ENCODE measurements at regions of chr10 and their contacts with region 1.

Region 1: DNA sequence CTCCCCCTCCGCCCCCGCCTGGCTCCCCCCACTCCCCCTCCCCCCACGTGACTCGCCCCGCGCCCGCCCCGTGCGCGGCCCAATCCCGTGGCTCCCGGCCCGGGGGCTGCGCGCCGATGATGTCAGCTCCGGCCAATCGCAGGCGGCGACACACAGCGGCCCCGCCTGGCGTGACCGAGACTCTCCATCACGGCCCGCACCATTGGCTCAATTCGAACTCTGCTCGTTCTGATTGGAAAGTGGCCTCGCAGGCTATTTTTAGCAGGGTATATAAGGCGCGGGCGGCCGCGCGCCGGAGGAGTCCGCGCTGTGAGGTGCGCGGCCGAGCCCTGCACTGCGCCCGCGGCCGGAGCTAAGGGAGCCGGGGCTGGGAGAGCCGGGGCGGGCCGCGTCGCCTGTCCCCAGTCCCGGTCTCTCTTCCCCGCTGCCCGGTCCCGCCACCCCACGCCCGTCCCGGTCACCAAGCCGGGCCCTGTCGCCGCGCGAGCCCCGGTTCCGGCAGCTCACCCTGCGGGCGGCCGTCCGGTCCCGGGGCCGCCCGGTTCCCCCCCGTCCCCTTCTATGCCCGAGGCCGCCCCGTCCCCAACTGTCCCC is 345 bp upstream of the KLF6 start:
- DNase-seq: peak; percentile 97 to 99
- ATAC-seq: peak; percentile 70 to 80
- H3K4me3 ChIP-seq: peak overlapping the region; percentile 82
- H3K27ac ChIP-seq: peak overlapping the region; percentile 100
- H3K4me1 ChIP-seq: peaks cover 26% of the 10 kb centered on the region
- CTCF ChIP-seq: no peak
- EP300 ChIP-seq: peak in 1 of 2 experiments; percentile 22; a peak in 2 of 5 replicates
- POLR2A ChIP-seq: peak; percentile 98
- RAD21 ChIP-seq: no peak; a peak in 1 of 5 replicates

Region 2: DNA sequence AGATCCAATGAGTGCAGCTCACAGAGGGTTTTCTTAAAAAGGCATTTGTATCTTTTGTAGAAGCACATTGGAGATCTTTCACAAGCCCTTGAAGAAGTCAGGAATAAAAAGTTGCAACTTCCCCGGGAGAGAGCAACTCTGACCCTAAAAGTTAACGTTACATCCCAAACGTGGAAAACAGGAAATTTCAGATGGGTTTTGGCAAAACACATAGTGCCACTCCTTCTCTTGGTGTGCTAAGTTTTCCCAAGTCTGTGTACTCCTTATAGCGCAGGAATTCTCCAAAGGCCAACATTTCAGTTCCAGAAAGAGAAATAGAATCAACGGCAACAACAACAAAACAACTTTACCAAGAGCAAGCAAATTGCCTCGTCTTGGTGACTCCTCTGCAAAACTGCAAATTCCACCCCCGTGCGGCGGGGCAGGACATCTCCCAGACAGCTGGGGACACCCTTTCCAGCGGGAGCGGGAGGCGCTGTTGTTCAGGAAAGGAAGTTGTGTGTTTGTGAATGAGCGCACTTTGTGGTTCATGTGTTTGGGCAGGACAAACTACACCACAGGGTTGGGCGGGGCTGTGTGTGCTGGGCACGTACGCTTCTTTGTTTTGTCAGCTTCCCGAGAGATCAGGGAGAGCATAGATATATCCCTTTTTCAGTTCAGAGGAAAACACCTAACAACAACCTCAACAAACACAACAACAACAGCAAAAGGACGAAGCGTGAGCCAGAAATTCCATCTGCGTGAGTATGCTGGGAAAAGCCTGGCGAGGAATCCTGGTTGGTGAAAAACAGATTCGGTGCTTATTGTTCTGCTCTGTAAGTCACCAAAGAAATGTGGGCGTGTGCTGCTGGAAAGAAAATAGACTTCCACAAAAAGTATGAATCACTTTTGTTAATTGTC is 318.1 kb before region 1 on chr10:
- CTCF ChIA-PET with region 1: interaction called, 6 read pairs
- POLR2A ChIA-PET with region 1: interaction called, 27 read pairs
- DNase-seq: peak; percentile 73 to 98
- ATAC-seq: peak; percentile 76 to 80
- H3K4me3 ChIP-seq: peak overlapping the region; percentile 33
- H3K27ac ChIP-seq: peak overlapping the region; percentile 82 to 92
- H3K4me1 ChIP-seq: peaks cover 47% of the 10 kb centered on the region
- CTCF ChIP-seq: peak; percentile 91
- EP300 ChIP-seq: no peak
- POLR2A ChIP-seq: no peak
- RAD21 ChIP-seq: peak; percentile 86 to 91

Region 3: DNA sequence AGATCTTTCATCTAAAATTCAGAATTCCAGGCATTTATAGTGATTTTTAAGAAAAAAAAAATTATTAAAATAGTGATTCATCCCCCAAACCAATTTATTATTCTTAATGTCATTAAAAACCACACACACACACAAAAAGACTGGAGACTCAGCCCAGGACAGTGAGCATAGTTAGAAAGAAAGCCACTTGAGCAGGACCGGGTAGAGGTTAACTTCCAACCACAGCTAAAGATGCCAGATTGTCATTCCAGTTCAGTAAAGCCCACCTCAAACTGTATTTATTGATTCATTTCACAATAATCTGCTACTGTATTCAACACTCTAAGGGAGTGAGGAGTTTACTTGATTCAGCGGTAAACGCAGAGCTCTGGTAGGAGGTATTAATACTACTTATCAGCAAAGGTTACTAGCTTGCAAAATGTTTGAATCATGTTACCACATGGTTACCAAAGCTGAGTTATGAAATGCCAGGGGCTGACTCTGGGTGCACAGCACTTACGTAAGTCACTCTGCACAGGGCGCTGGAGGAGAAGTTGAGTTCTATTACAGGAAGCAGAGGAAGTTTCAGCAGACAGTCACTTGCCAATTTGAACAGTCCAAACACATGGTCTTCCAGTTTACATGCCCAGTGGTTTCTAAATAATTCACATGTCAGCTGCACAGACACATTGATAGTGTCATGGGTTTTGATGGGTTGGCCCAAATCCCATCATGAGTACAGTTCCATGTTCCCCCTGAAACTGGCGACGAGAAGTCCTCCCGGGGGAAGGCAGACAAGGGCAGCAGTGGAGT is 64.9 kb before region 1 on chr10:
- CTCF ChIA-PET with region 1: no interaction called
- POLR2A ChIA-PET with region 1: no interaction called
- DNase-seq: no peak
- ATAC-seq: 0 out of 6 replicates have a peak, but pooled peaks of 1 of the 2 experiments have one; percentile 47
- H3K4me3 ChIP-seq: no peak overlapping the region
- H3K27ac ChIP-seq: no peak overlapping the region
- H3K4me1 ChIP-seq: 0 out of 3 replicates have a peak, but pooled peaks cover 3% of the 10 kb centered on the region
- CTCF ChIP-seq: no peak
- EP300 ChIP-seq: no peak
- POLR2A ChIP-seq: no peak
- RAD21 ChIP-seq: no peak

Region 4: GRCh38 chr10:3811291-3811870 is 26.0 kb after region 1 on chr10:
- CTCF ChIA-PET with region 1: interaction called, 8 read pairs
- POLR2A ChIA-PET with region 1: interaction called, 75 read pairs
- DNase-seq: no peak
- ATAC-seq: no peak
- H3K4me3 ChIP-seq: no peak overlapping the region
- H3K27ac ChIP-seq: peak overlapping the region; percentile 82 to 84
- H3K4me1 ChIP-seq: peaks cover 60% of the 10 kb centered on the region
- CTCF ChIP-seq: no peak
- EP300 ChIP-seq: no peak
- POLR2A ChIP-seq: no peak
- RAD21 ChIP-seq: no peak

Region 5: GRCh38 chr10:3887885-3888476 is 102.6 kb after region 1 on chr10:
- CTCF ChIA-PET with region 1: interaction called, 3 read pairs
- POLR2A ChIA-PET with region 1: interaction called, 49 read pairs
- DNase-seq: peak; percentile 47 to 83
- ATAC-seq: peak; percentile 51 to 77
- H3K4me3 ChIP-seq: no peak overlapping the region; the same call in 2 of the 3 replicates
- H3K27ac ChIP-seq: peak overlapping the region; percentile 95 to 96
- H3K4me1 ChIP-seq: peaks cover 59% of the 10 kb centered on the region
- CTCF ChIP-seq: no peak
- EP300 ChIP-seq: peak in 1 of 2 experiments; percentile 31; a peak in 2 of 5 replicates
- POLR2A ChIP-seq: no peak
- RAD21 ChIP-seq: 0 out of 5 replicates have a peak, but pooled peaks of 1 of the 2 experiments have one; percentile 28

Region 6: GRCh38 chr10:4725917-4726606 is 940.7 kb after region 1 on chr10:
- CTCF ChIA-PET with region 1: no interaction called
- POLR2A ChIA-PET with region 1: interaction called, 14 read pairs
- DNase-seq: peak; percentile 26 to 90
- ATAC-seq: peak; percentile 94 to 97
- H3K4me3 ChIP-seq: peak overlapping the region; percentile 15; the same call in 1 of the 3 replicates
- H3K27ac ChIP-seq: peak overlapping the region; percentile 81 to 83
- H3K4me1 ChIP-seq: peaks cover 27% of the 10 kb centered on the region
- CTCF ChIP-seq: no peak
- EP300 ChIP-seq: peak; percentile 72 to 87; a peak in 3 of 5 replicates
- POLR2A ChIP-seq: no peak
- RAD21 ChIP-seq: peak; percentile 31 to 66

Measured in A549 (cell line).